ENCODE measurements at regions of chr13 and their contacts with region 1.

Region 1: GRCh38 chr13:41465241-41465847 is 8.0 kb downstream of the RGCC start:
- DNase-seq: peak; percentile 96
- H3K4me3 Mint-ChIP-seq: peak overlapping the region; percentile 66
- H3K27ac Mint-ChIP-seq: peak overlapping the region; percentile 97
- H3K4me1 Mint-ChIP-seq: peaks cover 92% of the 10 kb centered on the region
- H3K27me3 Mint-ChIP-seq: no peaks in the 10 kb centered on the region

Region 2: DNA sequence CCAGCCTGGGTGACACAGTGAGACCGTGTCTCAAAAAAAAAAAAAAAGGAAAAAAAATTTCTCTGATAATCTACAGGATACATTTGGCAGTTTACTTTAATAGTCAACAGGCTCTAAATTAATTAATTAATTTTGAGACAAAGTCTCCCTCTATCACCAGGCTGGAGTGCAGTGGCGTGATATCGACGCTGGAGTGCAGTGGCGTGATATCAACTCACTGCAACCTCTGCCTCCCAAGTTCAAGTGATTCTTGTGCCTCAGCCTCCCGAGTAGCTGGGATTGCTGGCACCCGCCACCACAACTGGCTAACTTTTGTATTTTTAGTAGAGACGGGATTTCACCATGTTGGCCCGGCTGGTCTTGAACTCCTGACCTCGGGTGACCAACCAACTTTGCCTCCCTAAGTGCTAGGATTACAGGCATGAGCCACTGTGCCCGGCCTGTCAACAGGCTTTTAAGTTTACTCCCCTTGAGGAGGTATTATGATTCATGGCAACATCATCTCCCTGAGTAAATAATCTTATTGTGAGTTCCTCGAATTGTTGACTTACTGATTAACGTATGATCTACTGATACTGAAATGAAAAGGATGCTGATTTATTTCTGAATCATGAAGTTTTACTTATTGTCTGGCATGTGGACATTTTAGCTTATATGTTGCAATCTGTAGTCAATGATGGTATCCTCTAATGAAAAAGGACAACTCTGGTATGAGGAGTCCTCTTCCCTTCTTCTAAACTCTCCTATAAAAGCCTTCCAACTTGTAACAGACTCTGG is 180.6 kb before region 1 on chr13:
- CTCF ChIA-PET with region 1: no interaction called
- POLR2A ChIA-PET with region 1: no interaction called
- intact Hi-C with region 1: no loop called
- DNase-seq: no peak
- H3K4me3 Mint-ChIP-seq: no peak overlapping the region
- H3K27ac Mint-ChIP-seq: no peak overlapping the region
- H3K4me1 Mint-ChIP-seq: peaks cover 15% of the 10 kb centered on the region
- H3K27me3 Mint-ChIP-seq: no peaks in the 10 kb centered on the region

Region 3: DNA sequence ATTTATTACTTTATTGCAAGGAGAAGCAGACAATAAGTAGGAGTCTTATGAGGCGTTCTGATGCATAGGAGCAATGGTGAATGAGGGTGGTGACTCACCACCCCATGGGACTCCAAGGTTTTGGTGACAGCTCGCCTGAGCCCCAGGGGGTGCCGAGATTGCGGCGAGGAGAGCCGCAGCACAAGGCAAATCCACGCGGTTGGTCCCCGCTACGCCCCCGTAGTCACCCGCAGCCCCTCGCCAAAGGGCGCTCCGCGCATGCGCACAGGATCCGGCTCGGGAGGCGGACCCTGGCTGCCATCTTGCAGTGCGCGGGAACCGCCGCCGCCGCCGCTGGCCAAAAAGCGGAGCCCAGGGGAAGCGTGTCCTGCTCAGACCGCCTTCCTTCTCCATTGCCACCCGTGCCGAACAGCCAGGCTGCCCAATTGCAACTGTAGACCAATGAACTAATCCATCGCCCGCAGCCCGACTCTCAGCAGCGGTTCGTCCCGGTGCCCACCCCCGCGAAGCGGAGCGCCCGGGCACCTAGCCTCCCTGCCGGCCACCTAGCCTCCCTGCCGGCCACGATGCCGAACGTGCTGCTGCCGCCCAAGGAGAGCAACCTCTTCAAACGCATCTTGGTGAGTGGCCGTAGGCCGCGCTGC is 154.3 kb before region 1 on chr13 and contains the start of gene NAA16:
- CTCF ChIA-PET with region 1: no interaction called
- POLR2A ChIA-PET with region 1: interaction called, 3 read pairs
- intact Hi-C with region 1: loop called (anchors 2 kb)
- DNase-seq: peak; percentile 97
- H3K4me3 Mint-ChIP-seq: peak within 1 kb of the TSS; percentile 93
- H3K27ac Mint-ChIP-seq: peak within 1 kb of the TSS; percentile 92
- H3K4me1 Mint-ChIP-seq: peaks cover 34% of the 10 kb centered on the region
- H3K27me3 Mint-ChIP-seq: no peaks in the 10 kb centered on the region
- total RNA-seq, gene NAA16: 19.2 to 23.2 TPM

Region 4: DNA sequence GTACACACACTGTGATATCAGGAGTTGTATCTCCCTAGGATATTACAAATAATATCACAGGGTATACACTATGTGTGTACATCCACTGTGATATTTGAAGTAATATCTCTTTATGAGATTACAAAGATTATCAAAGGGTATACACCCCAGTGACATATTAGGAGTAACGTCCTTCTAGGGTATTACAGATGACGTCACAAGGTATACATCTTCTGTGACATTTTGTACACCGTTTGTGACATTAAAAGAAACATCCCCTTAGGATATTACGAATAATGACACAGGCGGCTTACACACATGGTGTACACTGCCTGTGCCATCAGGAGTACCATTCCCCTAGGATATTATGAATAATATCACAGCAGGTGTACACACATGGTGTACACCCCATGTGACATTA is 21.4 kb before region 1 on chr13:
- CTCF ChIA-PET with region 1: no interaction called
- POLR2A ChIA-PET with region 1: no interaction called
- intact Hi-C with region 1: no loop called
- DNase-seq: no peak
- H3K4me3 Mint-ChIP-seq: no peak overlapping the region
- H3K27ac Mint-ChIP-seq: no peak overlapping the region
- H3K4me1 Mint-ChIP-seq: peaks cover 4% of the 10 kb centered on the region
- H3K27me3 Mint-ChIP-seq: no peaks in the 10 kb centered on the region

Region 5: GRCh38 chr13:41492404-41493260 is 27.3 kb after region 1 on chr13:
- CTCF ChIA-PET with region 1: interaction called, 24 read pairs
- POLR2A ChIA-PET with region 1: interaction called, 40 read pairs
- intact Hi-C with region 1: loop called (anchors 1 kb)
- DNase-seq: peak; percentile 42
- H3K4me3 Mint-ChIP-seq: peak overlapping the region; percentile 45
- H3K27ac Mint-ChIP-seq: peak overlapping the region; percentile 89
- H3K4me1 Mint-ChIP-seq: peaks cover 74% of the 10 kb centered on the region
- H3K27me3 Mint-ChIP-seq: no peaks in the 10 kb centered on the region

Region 6: DNA sequence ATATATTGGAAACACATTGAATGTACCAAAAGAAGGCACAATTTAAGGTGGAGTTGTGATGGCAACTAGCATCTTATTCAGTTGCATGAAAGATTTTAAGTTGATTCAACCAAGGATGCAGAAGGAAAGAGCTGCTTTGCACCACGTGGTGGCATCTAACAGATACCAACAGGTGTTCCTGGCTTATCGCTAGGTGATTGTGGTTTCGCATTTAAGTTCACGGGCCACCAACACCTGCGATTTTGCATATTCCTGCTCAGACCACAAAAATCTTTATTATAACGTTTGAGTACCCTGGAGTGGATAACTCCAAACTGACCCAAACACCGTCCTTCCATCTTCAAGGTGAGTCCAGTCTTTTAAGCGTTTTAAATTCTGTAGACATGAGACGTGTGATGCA is 37.3 kb after region 1 on chr13:
- CTCF ChIA-PET with region 1: interaction called, 10 read pairs
- POLR2A ChIA-PET with region 1: interaction called, 40 read pairs
- intact Hi-C with region 1: loop called (anchors 1 kb)
- DNase-seq: no peak
- H3K4me3 Mint-ChIP-seq: no peak overlapping the region
- H3K27ac Mint-ChIP-seq: no peak overlapping the region
- H3K4me1 Mint-ChIP-seq: peaks cover 46% of the 10 kb centered on the region
- H3K27me3 Mint-ChIP-seq: no peaks in the 10 kb centered on the region

Region 7: GRCh38 chr13:41554626-41555386 is 89.5 kb after region 1 on chr13:
- CTCF ChIA-PET with region 1: interaction called, 20 read pairs
- POLR2A ChIA-PET with region 1: interaction called, 4 read pairs
- intact Hi-C with region 1: loop called (anchors 1 kb)
- DNase-seq: peak; percentile 77
- H3K4me3 Mint-ChIP-seq: no peak overlapping the region
- H3K27ac Mint-ChIP-seq: peak overlapping the region; percentile 9
- H3K4me1 Mint-ChIP-seq: peaks cover 21% of the 10 kb centered on the region
- H3K27me3 Mint-ChIP-seq: peaks cover 2% of the 10 kb centered on the region

Region 8: DNA sequence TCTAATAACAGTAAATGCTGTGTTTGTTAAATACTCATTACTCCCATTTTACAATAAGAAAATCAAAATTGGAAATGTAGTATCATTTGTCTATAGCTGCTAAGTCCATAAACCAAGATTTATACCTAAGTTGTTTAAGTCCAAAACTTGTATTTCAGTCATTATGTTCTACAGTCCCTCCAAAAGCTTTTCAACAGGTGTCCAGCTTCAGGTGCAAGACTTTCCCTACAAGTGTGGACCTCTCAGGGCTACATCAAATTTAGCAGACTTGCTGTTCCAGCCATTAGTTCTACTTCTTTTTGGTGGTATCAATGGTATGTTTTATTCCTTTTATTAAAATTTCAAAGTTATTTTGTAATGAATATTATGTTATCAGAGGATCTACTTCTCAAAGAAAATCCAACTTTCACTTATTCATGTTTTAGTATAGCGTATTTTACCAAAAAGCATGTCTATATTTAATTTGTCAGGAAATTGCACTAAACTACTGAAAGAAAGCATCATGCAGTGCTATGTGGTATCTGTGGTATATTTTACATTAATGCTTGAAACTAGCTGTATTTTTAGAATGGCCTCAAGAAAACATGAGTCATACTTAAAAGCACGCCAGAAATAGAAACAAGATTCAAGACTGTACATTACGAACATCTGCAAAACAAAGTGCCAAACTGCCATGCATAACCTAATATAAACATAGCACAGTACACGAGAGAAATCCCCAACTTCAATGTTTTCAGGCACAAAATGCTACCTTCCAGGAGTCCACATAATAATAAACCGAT is 451.0 kb after region 1 on chr13:
- CTCF ChIA-PET with region 1: no interaction called
- POLR2A ChIA-PET with region 1: no interaction called
- intact Hi-C with region 1: loop called (anchors 5 kb)
- DNase-seq: no peak
- H3K4me3 Mint-ChIP-seq: peak overlapping the region; percentile 54
- H3K27ac Mint-ChIP-seq: peak overlapping the region; percentile 84
- H3K4me1 Mint-ChIP-seq: peaks cover 29% of the 10 kb centered on the region
- H3K27me3 Mint-ChIP-seq: no peaks in the 10 kb centered on the region

Measured in activated CD4-positive, alpha-beta memory T cell treated with anti-CD3 and anti-CD28 coated beads for 36 hours (primary cell).